ENCODE measurements at regions of chr11 and their contacts with region 1.

Region 1: GRCh38 chr11:8263769-8264410 is at the start of gene LMO1:
- DNase-seq: peak; percentile 74 to 98
- ATAC-seq: peak; percentile 60 to 86
- H3K4me3 ChIP-seq: peak within 1 kb of the TSS; percentile 66
- H3K27ac ChIP-seq: peak within 1 kb of the TSS; percentile 32 to 64; a peak in 4 of 6 replicates
- H3K4me1 ChIP-seq: peaks cover 4% of the 10 kb centered on the region; the same call in 1 of the 3 replicates
- CTCF ChIP-seq: peak; percentile 90
- EP300 ChIP-seq: no peak
- POLR2A ChIP-seq: no peak
- RAD21 ChIP-seq: peak; percentile 69 to 79
- polyA plus RNA-seq, gene LMO1: 0.18 and 1.3 TPM in 2 replicates

Region 2: DNA sequence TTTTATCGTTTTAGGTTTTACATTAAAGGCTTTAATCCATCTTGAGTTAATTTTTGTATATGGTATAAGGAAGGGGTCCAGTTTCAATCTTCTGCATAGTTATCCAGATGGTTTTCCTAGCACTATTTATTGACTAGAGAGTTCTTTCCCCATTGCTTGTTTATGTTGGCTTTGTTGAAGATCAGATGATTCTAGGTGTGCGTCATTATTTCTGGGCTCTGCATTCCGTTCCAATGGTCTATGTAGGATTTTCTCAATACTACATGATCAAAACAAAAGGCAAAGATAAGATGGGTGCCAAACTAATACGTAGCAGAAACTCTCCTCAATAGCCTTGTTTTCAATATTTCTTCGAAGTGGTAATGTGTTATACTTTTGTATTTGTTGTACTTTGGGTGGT is 80.8 kb before region 1 on chr11:
- CTCF ChIA-PET with region 1: no interaction called
- POLR2A ChIA-PET with region 1: no interaction called
- DNase-seq: no peak
- ATAC-seq: no peak
- H3K4me3 ChIP-seq: no peak overlapping the region
- H3K27ac ChIP-seq: no peak overlapping the region
- H3K4me1 ChIP-seq: no peaks in the 10 kb centered on the region
- CTCF ChIP-seq: no peak
- EP300 ChIP-seq: no peak
- POLR2A ChIP-seq: no peak
- RAD21 ChIP-seq: no peak

Region 3: DNA sequence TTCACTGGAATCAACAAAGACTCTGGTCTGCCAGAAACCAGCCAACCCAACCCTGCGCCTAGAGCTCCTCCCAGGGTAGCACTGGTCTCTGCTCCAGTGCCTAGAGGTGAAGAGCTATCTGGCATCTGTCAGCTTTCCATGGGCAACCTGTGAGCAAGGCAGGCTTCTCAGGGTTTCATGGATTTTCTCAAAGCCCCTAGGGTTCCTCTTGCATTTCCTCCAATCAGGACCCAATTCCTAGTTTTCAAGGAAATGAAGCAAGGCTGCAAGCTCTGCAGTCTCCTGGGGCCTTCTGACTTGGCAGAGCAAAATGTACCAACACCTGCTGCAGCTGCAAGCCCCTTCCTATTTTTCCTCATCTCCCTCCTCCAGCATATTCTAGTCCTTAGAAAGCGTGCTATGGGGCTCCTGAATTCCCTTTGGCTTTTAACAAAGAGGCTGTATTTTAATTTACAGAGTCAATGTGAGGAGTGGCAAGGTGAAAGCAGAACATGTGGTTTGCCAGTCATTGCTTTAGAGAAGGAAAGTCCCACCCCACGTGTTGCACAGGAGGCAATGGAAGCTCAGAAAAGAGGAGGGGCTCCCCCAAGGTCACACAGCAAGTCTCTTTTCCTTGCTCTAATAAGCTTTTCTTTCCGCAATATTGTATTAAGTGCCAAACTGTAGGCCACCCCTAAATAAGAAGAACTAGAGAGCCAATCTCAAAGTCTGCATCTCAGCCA is 62.1 kb before region 1 on chr11:
- CTCF ChIA-PET with region 1: interaction called, 36 read pairs
- POLR2A ChIA-PET with region 1: no interaction called
- DNase-seq: no peak
- ATAC-seq: no peak
- H3K4me3 ChIP-seq: no peak overlapping the region
- H3K27ac ChIP-seq: no peak overlapping the region
- H3K4me1 ChIP-seq: no peaks in the 10 kb centered on the region
- CTCF ChIP-seq: no peak
- EP300 ChIP-seq: no peak
- POLR2A ChIP-seq: no peak
- RAD21 ChIP-seq: no peak

Region 4: GRCh38 chr11:8239536-8240228 is 24.2 kb before region 1 on chr11:
- CTCF ChIA-PET with region 1: interaction called, 424 read pairs
- POLR2A ChIA-PET with region 1: interaction called, 4 read pairs
- DNase-seq: no peak
- ATAC-seq: no peak
- H3K4me3 ChIP-seq: no peak overlapping the region
- H3K27ac ChIP-seq: no peak overlapping the region
- H3K4me1 ChIP-seq: peaks cover 6% of the 10 kb centered on the region
- CTCF ChIP-seq: no peak
- EP300 ChIP-seq: no peak
- POLR2A ChIP-seq: no peak
- RAD21 ChIP-seq: no peak

Region 5: GRCh38 chr11:8277691-8278090 is 13.8 kb after region 1 on chr11:
- CTCF ChIA-PET with region 1: interaction called, 34 read pairs
- POLR2A ChIA-PET with region 1: no interaction called
- DNase-seq: no peak
- ATAC-seq: no peak
- H3K4me3 ChIP-seq: no peak overlapping the region
- H3K27ac ChIP-seq: no peak overlapping the region
- H3K4me1 ChIP-seq: peaks cover 5% of the 10 kb centered on the region; the same call in 2 of the 3 replicates
- CTCF ChIP-seq: no peak
- EP300 ChIP-seq: no peak
- POLR2A ChIP-seq: no peak
- RAD21 ChIP-seq: no peak

Region 6: GRCh38 chr11:8408151-8408941 is 144.5 kb after region 1 on chr11:
- CTCF ChIA-PET with region 1: no interaction called
- POLR2A ChIA-PET with region 1: no interaction called
- DNase-seq: no peak
- ATAC-seq: no peak
- H3K4me3 ChIP-seq: no peak overlapping the region
- H3K27ac ChIP-seq: no peak overlapping the region
- H3K4me1 ChIP-seq: no peaks in the 10 kb centered on the region
- CTCF ChIP-seq: no peak
- EP300 ChIP-seq: no peak
- POLR2A ChIP-seq: no peak
- RAD21 ChIP-seq: no peak

Region 7: DNA sequence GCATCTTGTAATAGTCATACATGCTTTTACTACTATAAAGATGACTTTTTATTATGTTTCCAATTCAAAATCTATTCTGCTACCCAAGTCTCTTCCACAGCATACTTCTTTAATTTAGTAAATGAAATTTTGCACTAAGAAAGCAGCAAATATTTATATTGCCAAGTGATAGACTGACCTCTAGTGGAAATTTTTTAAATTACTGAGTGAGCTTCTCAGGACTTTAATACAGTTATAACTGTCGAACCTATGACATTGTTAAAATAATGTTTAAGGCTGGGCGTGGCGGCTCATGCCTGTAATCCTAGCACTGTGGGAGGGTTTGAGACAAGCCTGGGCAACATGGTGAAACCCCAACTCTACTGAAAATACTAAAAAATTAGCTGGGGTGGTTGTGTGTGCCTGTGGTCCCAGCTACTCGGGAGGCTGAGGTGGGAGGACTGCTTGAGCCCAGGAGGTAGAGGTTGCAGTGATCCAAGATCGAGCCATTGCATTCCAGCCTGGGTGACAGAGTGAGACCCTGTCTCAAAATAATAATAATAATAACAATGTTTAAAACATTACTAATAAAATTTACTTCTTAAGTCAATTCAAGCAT is 302.8 kb after region 1 on chr11:
- CTCF ChIA-PET with region 1: interaction called, 16 read pairs
- POLR2A ChIA-PET with region 1: no interaction called
- DNase-seq: peak in 1 of 2 experiments; percentile 44
- ATAC-seq: peak; percentile 85 to 87
- H3K4me3 ChIP-seq: no peak overlapping the region
- H3K27ac ChIP-seq: no peak overlapping the region
- H3K4me1 ChIP-seq: peaks cover 8% of the 10 kb centered on the region; the same call in 2 of the 3 replicates
- CTCF ChIP-seq: peak; percentile 84
- EP300 ChIP-seq: no peak
- POLR2A ChIP-seq: no peak
- RAD21 ChIP-seq: peak; percentile 88 to 93